GM12878 (cell line): ENCODE measurements at regions of chr6 and their contacts with region 1.

Region 1: GRCh38 chr6:24589334-24589733 is 56.7 kb downstream of the KIAA0319 start:
- DNase-seq: no peak
- ATAC-seq: no peak
- H3K4me3 ChIP-seq: no peak overlapping the region
- H3K27ac ChIP-seq: no peak overlapping the region
- H3K4me1 ChIP-seq: no peaks in the 10 kb centered on the region
- H3K27me3 ChIP-seq: no peaks in the 10 kb centered on the region
- CTCF ChIP-seq: no peak
- EP300 ChIP-seq: no peak
- POLR2A ChIP-seq: no peak
- RAD21 ChIP-seq: no peak

Region 2: GRCh38 chr6:24761193-24761835 is 172.0 kb after region 1 on chr6:
- CTCF ChIA-PET with region 1: interaction called, 28 read pairs
- POLR2A ChIA-PET with region 1: no interaction called
- RAD21 ChIA-PET with region 1: no interaction called
- SMC1A ChIA-PET with region 1: interaction called, 9 read pairs
- in situ Hi-C with region 1: loop called (anchors 5 kb)
- intact Hi-C with region 1: no loop called
- DNase-seq: no peak
- ATAC-seq: peak; percentile 70
- H3K4me3 ChIP-seq: no peak overlapping the region
- H3K27ac ChIP-seq: no peak overlapping the region
- H3K4me1 ChIP-seq: no peaks in the 10 kb centered on the region
- H3K27me3 ChIP-seq: no peaks in the 10 kb centered on the region
- CTCF ChIP-seq: no peak
- EP300 ChIP-seq: no peak
- POLR2A ChIP-seq: no peak
- RAD21 ChIP-seq: no peak

Region 3: DNA sequence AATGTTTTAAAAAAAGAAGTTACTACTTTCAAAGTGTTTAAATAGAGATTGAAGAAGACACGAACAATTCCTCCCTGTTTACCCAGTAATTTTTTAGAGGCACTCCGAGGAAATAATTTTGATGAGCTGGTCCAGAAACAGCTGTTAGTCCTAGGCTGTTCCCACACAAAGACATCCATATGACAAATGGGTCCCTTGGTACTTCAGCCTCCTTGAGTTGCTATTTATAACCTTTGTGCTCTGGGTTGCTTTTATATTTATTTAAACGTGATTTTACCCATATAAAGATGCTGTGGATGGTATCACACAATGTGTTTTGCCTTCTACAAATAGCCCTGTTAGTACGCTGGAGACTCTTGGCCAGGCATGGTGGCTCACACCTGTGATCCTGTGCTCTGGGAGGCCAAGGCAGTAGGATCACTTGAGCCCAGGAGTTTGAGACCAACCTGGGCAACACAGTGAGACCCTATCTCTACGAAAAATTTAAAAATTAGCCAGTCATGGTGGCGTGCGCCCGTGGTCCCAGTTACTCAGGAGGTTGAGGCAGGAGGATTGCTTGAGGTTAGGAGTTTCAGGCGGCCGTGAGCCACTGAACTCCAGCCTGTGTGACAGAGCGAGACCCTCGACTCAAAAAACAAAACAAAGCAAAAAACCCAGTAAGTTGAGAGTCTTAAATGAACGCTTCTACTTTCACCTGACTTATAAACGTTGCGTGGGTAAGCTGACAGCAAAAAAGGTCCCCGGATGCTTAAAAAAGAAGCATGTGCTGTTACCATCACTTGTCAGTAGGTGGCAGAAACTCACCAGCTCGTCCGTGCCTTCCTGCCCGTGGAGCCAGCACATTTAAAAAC is 266.3 kb after region 1 on chr6:
- CTCF ChIA-PET with region 1: no interaction called
- POLR2A ChIA-PET with region 1: no interaction called
- RAD21 ChIA-PET with region 1: no interaction called
- SMC1A ChIA-PET with region 1: no interaction called
- in situ Hi-C with region 1: no loop called
- intact Hi-C with region 1: no loop called
- DNase-seq: peak; percentile 58
- ATAC-seq: peak; percentile 85
- H3K4me3 ChIP-seq: no peak overlapping the region
- H3K27ac ChIP-seq: no peak overlapping the region
- H3K4me1 ChIP-seq: peaks cover 32% of the 10 kb centered on the region
- H3K27me3 ChIP-seq: no peaks in the 10 kb centered on the region
- CTCF ChIP-seq: peak; percentile 78 to 90 (median 87)
- EP300 ChIP-seq: no peak
- POLR2A ChIP-seq: no peak
- RAD21 ChIP-seq: peak; percentile 98